PC-9 (cell line): ENCODE measurements at regions of chr20 and their contacts with region 1.

Region 1: DNA sequence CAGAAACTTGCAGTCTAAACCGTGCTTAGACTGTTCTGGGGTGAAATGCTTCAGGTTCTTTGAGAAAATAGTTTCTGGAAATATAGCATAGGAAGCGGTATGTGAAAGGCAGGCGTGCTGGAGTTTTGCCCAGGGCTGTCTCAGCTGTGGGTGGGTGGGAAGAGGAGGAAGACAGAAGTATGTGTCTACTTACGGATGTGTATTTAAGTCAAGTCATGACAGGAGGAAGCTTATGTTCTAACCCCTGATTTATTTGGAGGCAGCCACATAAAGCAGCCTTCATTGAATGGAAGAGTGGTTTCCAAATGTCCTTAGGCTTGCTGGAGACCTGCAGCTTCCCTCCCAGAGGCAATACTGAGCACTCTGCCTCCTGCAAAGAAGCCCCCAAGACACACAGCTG is 345.8 kb upstream of the PRND start:
- DNase-seq: no peak
- H3K4me3 ChIP-seq: no peak overlapping the region
- H3K27ac ChIP-seq: no peak overlapping the region
- H3K4me1 ChIP-seq: no peaks in the 10 kb centered on the region
- H3K27me3 ChIP-seq: 0 out of 2 replicates have a peak, but pooled peaks cover 1% of the 10 kb centered on the region
- CTCF ChIP-seq: no peak

Region 2: GRCh38 chr20:4320291-4320690 is 55.6 kb before region 1 on chr20:
- CTCF ChIA-PET with region 1: no interaction called
- POLR2A ChIA-PET with region 1: no interaction called
- intact Hi-C with region 1: no loop called
- DNase-seq: no peak
- H3K4me3 ChIP-seq: no peak overlapping the region
- H3K27ac ChIP-seq: no peak overlapping the region
- H3K4me1 ChIP-seq: no peaks in the 10 kb centered on the region
- H3K27me3 ChIP-seq: no peaks in the 10 kb centered on the region
- CTCF ChIP-seq: no peak

Region 3: DNA sequence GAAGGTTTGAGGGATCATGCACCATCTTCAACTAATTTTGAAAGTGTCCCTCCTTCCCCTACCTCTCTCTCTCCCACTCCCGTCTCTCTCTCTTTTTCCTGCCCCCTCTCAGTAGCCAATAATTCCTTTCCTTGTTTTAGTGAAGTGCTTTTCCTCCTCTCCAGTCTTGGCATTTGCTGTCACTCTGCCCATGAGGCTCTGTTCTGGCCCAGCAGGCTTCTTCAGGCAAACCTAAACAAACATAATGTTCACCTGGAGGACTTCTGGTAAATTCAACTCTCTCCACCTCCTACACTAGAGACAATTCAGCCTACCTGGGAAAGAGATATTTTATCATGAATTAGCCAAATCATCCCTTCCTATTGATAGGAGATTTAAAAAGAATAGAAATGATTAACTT is 40.2 kb before region 1 on chr20:
- CTCF ChIA-PET with region 1: no interaction called
- POLR2A ChIA-PET with region 1: no interaction called
- intact Hi-C with region 1: loop called (anchors 2 kb)
- DNase-seq: no peak
- H3K4me3 ChIP-seq: no peak overlapping the region
- H3K27ac ChIP-seq: no peak overlapping the region
- H3K4me1 ChIP-seq: no peaks in the 10 kb centered on the region
- H3K27me3 ChIP-seq: no peaks in the 10 kb centered on the region
- CTCF ChIP-seq: no peak

Region 4: DNA sequence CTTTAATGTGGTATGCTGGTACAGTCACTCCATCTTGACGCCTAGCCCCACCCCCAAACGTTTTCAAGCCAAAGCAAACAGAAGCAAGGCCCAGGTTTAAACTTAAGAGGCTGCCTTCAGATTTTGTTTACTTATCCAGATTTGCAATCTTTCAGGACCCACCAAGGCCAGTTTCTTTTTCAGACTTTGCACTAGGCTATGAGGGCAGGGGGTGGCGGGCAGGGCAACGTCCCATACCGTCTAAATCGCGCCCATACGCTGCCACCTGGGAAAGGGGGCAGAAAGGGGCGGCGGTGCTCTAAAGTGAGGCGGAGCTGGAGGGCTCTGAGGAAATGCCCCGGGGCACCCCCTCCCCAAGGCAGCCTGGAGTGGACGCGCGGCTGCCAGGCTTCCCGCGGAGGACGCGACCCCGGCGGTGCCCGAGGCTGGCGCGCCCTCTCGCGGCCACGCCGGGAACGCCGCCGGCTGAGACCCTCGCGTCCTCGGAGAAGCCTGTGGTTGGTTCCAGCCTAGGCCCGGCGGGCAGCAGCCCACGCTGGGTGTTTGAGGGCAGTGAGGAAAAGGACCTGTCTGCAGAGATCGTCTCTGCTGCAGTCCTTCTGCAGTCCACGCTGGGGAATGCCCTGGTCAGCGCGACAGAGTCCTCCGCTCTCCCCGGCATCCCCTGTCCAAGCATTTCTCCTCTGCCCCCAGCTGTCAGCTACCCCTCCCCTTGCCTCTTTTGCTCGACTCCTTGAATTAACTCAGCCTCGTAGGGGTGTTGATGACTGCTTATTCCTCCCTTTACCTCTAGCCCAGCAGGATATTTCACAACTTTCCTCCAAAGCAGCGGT is 216.7 kb after region 1 on chr20:
- CTCF ChIA-PET with region 1: no interaction called
- POLR2A ChIA-PET with region 1: no interaction called
- intact Hi-C with region 1: no loop called
- DNase-seq: peak in 1 of 2 experiments; percentile 67
- H3K4me3 ChIP-seq: peak overlapping the region; percentile 48; the same call in 1 of the 2 replicates
- H3K27ac ChIP-seq: no peak overlapping the region
- H3K4me1 ChIP-seq: peaks cover 5% of the 10 kb centered on the region; the same call in 1 of the 2 replicates
- H3K27me3 ChIP-seq: no peaks in the 10 kb centered on the region
- CTCF ChIP-seq: peak; percentile 89